Mucosa of descending colon (tissue), 3 donors: ENCODE measurements at regions of chr3 and their contacts with region 1.

Region 1: GRCh38 chr3:48465531-48466378 is 19.2 kb downstream of the ATRIP start:
- DNase-seq: peak; percentile 93 to 96 (median 95)
- ATAC-seq: peak; percentile 91
- H3K4me3 ChIP-seq: peak overlapping the region; percentile 15
- H3K4me1 ChIP-seq: peaks cover 40% of the 10 kb centered on the region
- CTCF ChIP-seq: peak; percentile 32

Region 2: GRCh38 chr3:48548729-48549705 is 83.3 kb after region 1 on chr3:
- intact Hi-C with region 1: loop called (anchors 5 kb)
- DNase-seq: peak; percentile 81 to 92 (median 89)
- ATAC-seq: peak; percentile 90
- H3K4me3 ChIP-seq: no peak overlapping the region
- H3K4me1 ChIP-seq: peaks cover 11% of the 10 kb centered on the region
- CTCF ChIP-seq: peak; percentile 76

Region 3: DNA sequence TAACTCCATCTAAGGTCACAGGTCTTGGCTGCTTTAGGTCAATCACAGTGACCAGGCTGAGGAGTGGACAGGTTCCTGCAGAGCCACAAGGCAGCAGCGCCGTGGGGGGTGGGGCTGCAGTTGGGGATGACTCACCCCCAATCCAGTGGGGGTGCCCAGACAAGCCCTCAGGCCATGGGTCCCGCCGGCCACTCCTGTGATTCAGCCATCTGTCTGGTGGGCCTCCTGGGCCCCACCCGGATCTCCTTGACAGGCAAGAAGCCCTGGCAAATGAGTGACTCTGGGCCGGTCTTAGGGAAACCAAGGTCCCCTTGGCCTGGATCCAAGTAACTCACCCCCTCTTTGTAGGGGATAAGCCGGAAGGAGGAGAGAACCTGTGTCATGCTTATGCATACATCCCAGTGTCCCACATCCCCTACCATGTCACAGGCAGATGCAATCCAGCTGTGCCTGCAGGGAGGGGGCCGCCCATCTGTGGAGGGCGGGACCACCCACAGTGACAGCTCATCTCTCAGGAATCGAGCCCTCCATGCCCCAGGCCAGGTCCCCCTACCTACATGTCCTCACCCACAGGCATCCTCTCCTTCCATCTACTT is 129.9 kb after region 1 on chr3:
- intact Hi-C with region 1: no loop called
- DNase-seq: peak in 2 of 3 donors; percentile 69 to 80
- ATAC-seq: peak; percentile 23
- H3K4me3 ChIP-seq: no peak overlapping the region
- H3K4me1 ChIP-seq: peaks cover 15% of the 10 kb centered on the region
- CTCF ChIP-seq: no peak